AG04450 (cell line): ENCODE measurements at regions of chr4 and their contacts with region 1.

Region 1: DNA sequence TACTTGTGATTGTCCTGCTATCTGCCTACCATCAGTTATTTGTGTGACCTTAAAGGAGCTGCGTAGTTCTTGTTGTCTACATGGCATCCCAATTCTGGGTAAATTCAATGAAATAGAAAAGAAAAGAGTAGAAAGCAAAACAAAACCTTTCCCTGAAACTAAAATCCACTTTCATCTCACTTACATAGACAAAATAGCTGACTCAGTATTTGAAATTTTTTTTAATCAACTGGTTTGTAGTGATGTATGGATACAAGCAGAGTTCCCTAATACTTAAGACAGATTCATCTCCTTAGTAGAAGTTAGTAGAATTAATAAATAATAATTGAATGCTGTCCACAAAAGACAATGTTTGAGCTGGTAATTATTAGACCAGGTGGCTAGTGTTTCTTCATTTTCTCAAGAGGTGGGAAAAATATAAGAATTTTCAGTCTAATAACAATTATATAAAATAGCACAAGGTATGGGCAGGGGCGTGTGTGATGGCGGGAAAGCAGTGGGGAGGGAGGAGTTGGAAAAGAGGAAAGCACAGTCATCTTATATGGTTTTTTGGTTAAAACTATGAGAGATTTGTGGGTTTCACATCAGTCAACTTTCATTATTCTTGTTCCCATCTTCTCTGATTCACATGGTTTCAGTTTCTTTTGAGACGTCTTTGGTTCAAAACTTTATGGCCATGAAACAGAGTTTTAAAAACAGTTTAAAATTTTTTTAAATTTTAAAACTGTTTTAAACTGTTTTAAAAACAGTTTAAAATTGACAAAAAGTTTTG is 275.2 kb downstream of the SPRY1 start:
- DNase-seq: no peak
- H3K4me3 ChIP-seq: no peak overlapping the region
- H3K27ac ChIP-seq: no peak overlapping the region
- H3K27me3 ChIP-seq: no peaks in the 10 kb centered on the region
- CTCF ChIP-seq: no peak

Region 2: DNA sequence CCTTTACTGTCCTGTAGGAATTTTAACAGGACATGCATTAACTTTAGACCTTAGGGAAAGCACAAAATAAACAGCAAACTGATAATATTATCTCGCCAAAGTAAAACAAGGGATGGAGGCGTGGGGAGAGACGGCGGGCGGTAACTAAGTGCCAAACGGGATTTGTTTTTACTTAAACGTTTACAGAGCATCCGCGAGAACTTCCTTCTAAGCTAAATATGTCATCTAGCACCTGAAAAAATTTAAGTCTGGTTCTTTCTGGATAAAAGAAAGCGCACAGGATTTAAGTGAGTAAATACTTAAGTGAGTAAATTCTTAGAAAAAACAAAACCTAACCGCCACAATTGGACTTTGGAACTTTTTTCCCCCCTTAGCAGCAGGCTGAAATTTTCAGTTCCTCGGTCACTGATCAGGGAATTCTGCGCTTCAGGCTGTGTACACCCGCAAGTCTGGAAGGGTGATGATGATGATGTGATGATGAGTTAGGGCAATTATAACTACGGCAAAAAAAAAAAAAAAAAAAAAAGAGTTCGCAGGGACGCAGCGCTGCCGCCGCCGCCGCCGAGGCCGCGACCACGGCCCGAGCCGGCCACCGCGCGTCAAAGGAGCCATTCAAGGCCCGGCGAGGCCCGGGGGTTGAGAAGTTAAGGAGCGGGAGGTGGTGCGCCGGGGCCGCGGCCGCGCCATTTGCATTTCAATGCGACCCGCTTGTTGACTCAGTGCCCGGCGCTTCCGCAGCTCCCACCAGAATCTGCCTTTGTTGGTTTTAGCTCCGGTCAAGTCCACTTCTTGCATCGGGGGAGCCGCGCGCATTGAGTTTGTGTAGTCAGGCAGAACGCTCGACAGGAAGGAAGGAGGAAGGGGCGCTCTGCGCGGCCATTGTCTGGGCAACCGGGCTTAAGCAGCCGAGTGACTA is 166.5 kb before region 1 on chr4:
- CTCF ChIA-PET with region 1: no interaction called
- POLR2A ChIA-PET with region 1: no interaction called
- DNase-seq: peak; percentile 10
- H3K4me3 ChIP-seq: peak overlapping the region; percentile 57
- H3K27ac ChIP-seq: peak overlapping the region; percentile 39
- H3K27me3 ChIP-seq: no peaks in the 10 kb centered on the region
- CTCF ChIP-seq: no peak

Region 3: DNA sequence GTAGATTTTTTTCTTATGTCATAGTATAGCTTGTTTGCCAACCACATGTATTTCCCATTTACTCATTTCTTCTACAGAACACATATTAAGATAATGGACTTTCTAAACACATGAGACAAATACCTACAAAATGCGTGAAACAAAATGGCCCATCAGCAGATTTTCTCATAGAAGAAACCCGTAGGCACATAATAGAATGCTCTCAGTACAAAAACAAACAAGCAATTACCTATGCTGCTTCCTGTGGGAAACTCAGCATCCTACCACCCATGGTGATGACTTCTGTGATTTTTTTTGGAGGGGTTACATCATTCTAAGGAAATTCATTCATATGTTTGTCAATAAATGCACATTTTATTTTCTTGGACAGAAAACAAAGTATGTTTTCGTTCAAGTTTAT is 68.4 kb after region 1 on chr4:
- CTCF ChIA-PET with region 1: interaction called, 15 read pairs
- POLR2A ChIA-PET with region 1: no interaction called
- DNase-seq: no peak
- H3K4me3 ChIP-seq: no peak overlapping the region
- H3K27ac ChIP-seq: no peak overlapping the region
- H3K27me3 ChIP-seq: no peaks in the 10 kb centered on the region
- CTCF ChIP-seq: no peak

Region 4: GRCh38 chr4:123749383-123749782 is 77.6 kb after region 1 on chr4:
- CTCF ChIA-PET with region 1: interaction called, 13 read pairs
- POLR2A ChIA-PET with region 1: no interaction called
- DNase-seq: no peak
- H3K4me3 ChIP-seq: no peak overlapping the region
- H3K27ac ChIP-seq: no peak overlapping the region
- H3K27me3 ChIP-seq: no peaks in the 10 kb centered on the region
- CTCF ChIP-seq: no peak

Region 5: GRCh38 chr4:124030160-124030561 is 358.3 kb after region 1 on chr4:
- CTCF ChIA-PET with region 1: no interaction called
- POLR2A ChIA-PET with region 1: no interaction called
- DNase-seq: no peak
- H3K4me3 ChIP-seq: no peak overlapping the region
- H3K27ac ChIP-seq: no peak overlapping the region
- H3K27me3 ChIP-seq: no peaks in the 10 kb centered on the region
- CTCF ChIP-seq: no peak